Activated CD4-positive, alpha-beta memory T cell treated with anti-CD3 and anti-CD28 coated beads for 36 hours (primary cell): ENCODE measurements at regions of chr21 and their contacts with region 1.

Region 1: DNA sequence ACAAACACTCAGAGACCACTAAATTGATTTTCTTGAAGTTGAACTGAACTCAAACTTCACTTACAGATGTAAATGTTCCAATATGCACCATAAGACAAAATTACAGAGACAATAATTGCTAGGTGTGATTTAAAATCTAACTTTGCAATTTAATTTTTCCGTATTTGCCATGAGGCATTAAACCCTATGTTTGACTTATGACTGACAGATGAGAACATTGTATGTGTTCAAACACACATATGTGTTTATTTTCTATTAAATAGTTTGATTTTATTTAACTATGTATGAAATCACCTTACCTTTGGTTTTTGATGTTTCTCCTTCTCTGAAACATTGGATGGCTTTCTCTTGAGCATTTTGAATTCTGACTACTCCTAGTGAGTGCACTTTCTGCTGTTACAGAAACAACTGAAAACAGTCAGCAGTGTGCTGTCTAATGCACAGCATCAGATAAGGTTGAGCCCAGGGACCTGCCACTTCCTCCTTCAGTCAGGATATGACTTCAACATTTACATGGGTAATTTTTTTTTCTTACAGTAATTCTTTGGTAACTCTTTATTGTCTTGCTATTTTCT is at the start of gene SAMSN1:
- DNase-seq: peak; percentile 83
- H3K4me3 Mint-ChIP-seq: peak within 1 kb of the TSS; percentile 89
- H3K27ac Mint-ChIP-seq: peak within 1 kb of the TSS; percentile 95
- H3K4me1 Mint-ChIP-seq: peaks cover 49% of the 10 kb centered on the region
- H3K27me3 Mint-ChIP-seq: no peaks in the 10 kb centered on the region
- total RNA-seq, gene SAMSN1: 47.5 to 48.4 TPM

Region 2: GRCh38 chr21:14454016-14455009 is 91.7 kb before region 1 on chr21:
- CTCF ChIA-PET with region 1: interaction called, 3 read pairs
- POLR2A ChIA-PET with region 1: interaction called, 8 read pairs
- intact Hi-C with region 1: loop called (anchors 5 kb)
- DNase-seq: no peak
- H3K4me3 Mint-ChIP-seq: no peak overlapping the region
- H3K27ac Mint-ChIP-seq: peak overlapping the region; percentile 74
- H3K4me1 Mint-ChIP-seq: peaks cover 42% of the 10 kb centered on the region
- H3K27me3 Mint-ChIP-seq: no peaks in the 10 kb centered on the region

Region 3: GRCh38 chr21:14533504-14534428 is 12.2 kb before region 1 on chr21:
- CTCF ChIA-PET with region 1: no interaction called
- POLR2A ChIA-PET with region 1: interaction called, 58 read pairs
- intact Hi-C with region 1: loop called (anchors 1 kb)
- DNase-seq: peak; percentile 29
- H3K4me3 Mint-ChIP-seq: peak overlapping the region; percentile 95
- H3K27ac Mint-ChIP-seq: peak overlapping the region; percentile 100
- H3K4me1 Mint-ChIP-seq: peaks cover 82% of the 10 kb centered on the region
- H3K27me3 Mint-ChIP-seq: peaks cover 2% of the 10 kb centered on the region

Region 4: DNA sequence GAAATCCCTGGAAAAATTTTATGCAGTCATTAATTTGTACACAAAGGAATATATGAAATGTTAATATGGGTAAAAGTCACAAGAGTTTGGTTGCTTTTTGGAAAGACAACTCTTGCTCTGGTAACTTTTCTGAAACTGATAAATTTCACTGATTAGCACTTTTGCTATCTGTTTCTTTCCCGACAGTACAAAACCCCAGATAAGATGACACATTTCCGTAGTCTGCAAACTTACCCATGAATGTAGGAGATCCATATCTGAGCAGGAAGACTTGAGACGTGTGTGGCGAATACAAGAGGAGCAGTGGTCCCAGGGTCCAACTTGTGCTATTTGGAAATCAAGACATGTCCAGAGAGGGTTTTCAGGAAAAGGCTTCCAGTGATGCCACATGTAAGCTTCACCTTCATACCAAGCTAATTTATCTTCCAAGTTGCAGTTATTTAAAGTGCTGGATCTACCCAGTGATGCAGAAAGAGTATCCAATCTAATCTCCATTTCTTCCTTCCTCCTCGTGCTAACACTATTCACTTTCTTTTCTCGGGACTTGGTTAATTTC is 36.0 kb after region 1 on chr21:
- CTCF ChIA-PET with region 1: no interaction called
- POLR2A ChIA-PET with region 1: interaction called, 3 read pairs
- intact Hi-C with region 1: loop called (anchors 1 kb)
- DNase-seq: peak; percentile 17
- H3K4me3 Mint-ChIP-seq: peak overlapping the region; percentile 42
- H3K27ac Mint-ChIP-seq: peak overlapping the region; percentile 26
- H3K4me1 Mint-ChIP-seq: peaks cover 24% of the 10 kb centered on the region
- H3K27me3 Mint-ChIP-seq: peaks cover 4% of the 10 kb centered on the region

Region 5: GRCh38 chr21:14630556-14631069 is 84.6 kb after region 1 on chr21:
- CTCF ChIA-PET with region 1: interaction called, 3 read pairs
- POLR2A ChIA-PET with region 1: interaction called, 3 read pairs
- intact Hi-C with region 1: loop called (anchors 1 kb)
- DNase-seq: no peak
- H3K4me3 Mint-ChIP-seq: no peak overlapping the region
- H3K27ac Mint-ChIP-seq: peak overlapping the region; percentile 70
- H3K4me1 Mint-ChIP-seq: peaks cover 27% of the 10 kb centered on the region
- H3K27me3 Mint-ChIP-seq: no peaks in the 10 kb centered on the region

Region 6: DNA sequence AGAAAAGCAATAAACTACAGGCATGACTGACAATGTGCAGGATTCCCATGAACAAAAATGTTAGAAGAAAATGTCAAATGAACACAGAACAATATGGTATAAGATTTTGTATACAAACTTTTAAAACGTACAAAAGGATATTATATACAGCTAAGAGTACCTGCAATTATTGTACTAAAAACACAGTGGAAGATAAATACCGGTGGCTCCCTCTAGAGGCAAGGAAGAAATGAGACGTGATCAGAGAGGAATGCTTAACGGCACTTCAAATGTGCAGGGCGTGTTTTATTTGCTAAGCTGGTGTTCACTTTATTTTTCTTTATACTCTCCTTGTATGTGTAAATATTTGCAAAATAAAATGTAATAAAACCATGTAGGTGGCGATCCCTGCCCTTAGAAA is 191.9 kb after region 1 on chr21:
- CTCF ChIA-PET with region 1: interaction called, 14 read pairs
- POLR2A ChIA-PET with region 1: no interaction called
- intact Hi-C with region 1: loop called (anchors 2 kb)
- DNase-seq: peak; percentile 38
- H3K4me3 Mint-ChIP-seq: no peak overlapping the region
- H3K27ac Mint-ChIP-seq: no peak overlapping the region
- H3K4me1 Mint-ChIP-seq: peaks cover 31% of the 10 kb centered on the region
- H3K27me3 Mint-ChIP-seq: no peaks in the 10 kb centered on the region

Region 7: DNA sequence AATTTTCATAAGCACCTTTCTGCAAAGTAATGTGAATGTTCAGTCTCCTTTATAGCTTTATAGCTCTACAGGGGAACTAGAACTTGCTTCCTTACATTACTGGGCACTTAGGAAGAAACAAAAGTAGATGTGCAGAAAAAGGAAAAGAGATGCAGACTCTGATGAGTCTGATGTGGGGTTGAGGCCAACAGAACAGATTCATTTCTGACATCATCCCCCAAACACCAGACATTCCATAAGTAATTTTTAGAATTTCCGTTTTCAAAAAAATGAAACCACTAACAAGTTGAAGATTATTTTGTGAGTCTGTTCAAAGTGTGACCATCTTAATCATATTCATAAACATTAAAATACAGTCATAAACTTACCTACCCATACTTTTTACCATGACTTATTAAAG is 422.8 kb after region 1 on chr21:
- CTCF ChIA-PET with region 1: no interaction called
- POLR2A ChIA-PET with region 1: no interaction called
- intact Hi-C with region 1: no loop called
- DNase-seq: no peak
- H3K4me3 Mint-ChIP-seq: no peak overlapping the region
- H3K27ac Mint-ChIP-seq: no peak overlapping the region
- H3K4me1 Mint-ChIP-seq: no peaks in the 10 kb centered on the region
- H3K27me3 Mint-ChIP-seq: no peaks in the 10 kb centered on the region